ENCODE measurements at regions of chrX and their contacts with region 1.

Region 1: DNA sequence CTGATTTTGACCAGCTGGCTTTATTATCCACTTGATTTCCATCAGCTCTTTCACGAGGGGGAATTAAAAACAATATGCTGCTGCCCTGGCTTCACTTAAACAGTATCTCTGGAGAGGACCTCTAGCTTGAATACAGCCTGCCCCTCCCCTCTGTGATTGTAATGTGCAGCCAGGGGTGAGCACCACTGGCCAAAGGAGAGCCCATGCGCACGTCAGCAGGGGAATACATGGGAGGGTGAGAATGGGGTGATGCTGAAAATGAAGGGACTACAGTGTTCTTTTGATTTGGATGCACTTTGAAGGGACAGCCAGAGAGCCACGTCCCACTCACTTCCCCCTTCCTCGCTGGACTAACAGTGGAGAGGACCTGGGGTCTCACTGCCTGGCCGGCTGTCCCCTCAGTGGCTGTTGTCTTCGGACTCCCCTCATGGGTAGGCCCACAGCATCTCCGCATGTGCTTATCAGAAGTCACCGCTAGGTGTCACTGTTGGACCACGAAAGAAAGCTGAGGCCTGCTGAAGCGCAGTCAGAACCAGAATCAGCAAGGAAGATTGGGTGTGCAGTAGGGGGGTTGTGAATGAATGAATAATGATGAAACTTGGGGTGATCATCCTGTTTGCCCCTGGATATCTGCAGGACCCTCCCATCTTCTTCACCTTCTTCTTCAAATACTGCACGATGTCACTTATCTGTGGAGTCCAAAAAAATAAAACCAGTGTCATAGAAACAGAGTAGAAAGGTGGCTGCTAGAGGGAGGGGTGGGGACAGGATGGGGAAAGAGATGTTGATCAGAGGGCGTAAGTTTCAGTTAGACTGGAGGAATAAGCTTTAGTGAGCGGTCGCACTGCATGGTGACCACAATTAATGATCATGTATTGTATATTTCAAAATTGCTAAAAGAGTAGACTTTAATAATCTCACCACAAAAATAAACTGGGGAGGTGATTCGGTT is 32.8 kb downstream of the CLCN4 start:
- H3K4me3 Mint-ChIP-seq: no peak overlapping the region
- H3K27ac Mint-ChIP-seq: peak overlapping the region; percentile 62
- H3K4me1 Mint-ChIP-seq: peaks cover 27% of the 10 kb centered on the region
- H3K27me3 Mint-ChIP-seq: no peaks in the 10 kb centered on the region

Region 2: GRCh38 chrX:10597871-10598270 is 408.3 kb after region 1 on chrX:
- intact Hi-C with region 1: loop called (anchors 5 kb)
- H3K4me3 Mint-ChIP-seq: no peak overlapping the region
- H3K27ac Mint-ChIP-seq: no peak overlapping the region
- H3K4me1 Mint-ChIP-seq: no peaks in the 10 kb centered on the region
- H3K27me3 Mint-ChIP-seq: no peaks in the 10 kb centered on the region

Region 3: DNA sequence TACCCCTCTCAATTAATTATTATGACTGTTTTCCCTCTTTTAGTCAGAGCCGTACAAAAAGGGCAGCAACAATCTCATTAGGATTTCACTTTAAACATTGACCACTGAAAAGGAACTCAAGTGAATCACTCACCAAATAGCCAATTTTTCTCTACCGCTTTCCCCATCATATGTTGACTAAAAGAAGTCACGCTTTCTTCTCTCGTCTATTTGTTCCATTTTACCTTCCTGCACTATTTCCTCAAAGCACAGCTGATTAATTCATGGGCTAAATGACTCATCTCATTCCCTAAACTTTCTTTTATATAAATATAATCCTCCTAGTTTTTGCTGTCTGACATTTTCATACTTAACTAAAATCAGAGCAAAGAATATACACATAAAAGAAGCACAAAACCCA is 422.6 kb after region 1 on chrX:
- intact Hi-C with region 1: loop called (anchors 5 kb)
- H3K4me3 Mint-ChIP-seq: no peak overlapping the region
- H3K27ac Mint-ChIP-seq: no peak overlapping the region
- H3K4me1 Mint-ChIP-seq: no peaks in the 10 kb centered on the region
- H3K27me3 Mint-ChIP-seq: peaks cover 11% of the 10 kb centered on the region

Region 4: GRCh38 chrX:10722851-10723250 is 533.3 kb after region 1 on chrX:
- intact Hi-C with region 1: loop called (anchors 2 kb)
- H3K4me3 Mint-ChIP-seq: no peak overlapping the region
- H3K27ac Mint-ChIP-seq: no peak overlapping the region
- H3K4me1 Mint-ChIP-seq: no peaks in the 10 kb centered on the region
- H3K27me3 Mint-ChIP-seq: no peaks in the 10 kb centered on the region

Region 5: GRCh38 chrX:10769195-10769594 is 579.6 kb after region 1 on chrX:
- intact Hi-C with region 1: loop called (anchors 5 kb)
- H3K4me3 Mint-ChIP-seq: no peak overlapping the region
- H3K27ac Mint-ChIP-seq: no peak overlapping the region
- H3K4me1 Mint-ChIP-seq: no peaks in the 10 kb centered on the region
- H3K27me3 Mint-ChIP-seq: peaks cover 1% of the 10 kb centered on the region

Region 6: GRCh38 chrX:11137543-11138139 is 948.0 kb after region 1 on chrX:
- intact Hi-C with region 1: loop called (anchors 2 kb)
- H3K4me3 Mint-ChIP-seq: no peak overlapping the region
- H3K27ac Mint-ChIP-seq: no peak overlapping the region
- H3K4me1 Mint-ChIP-seq: no peaks in the 10 kb centered on the region
- H3K27me3 Mint-ChIP-seq: peaks cover 16% of the 10 kb centered on the region